Activated CD4-positive, alpha-beta T cell treated with anti-CD3 and anti-CD28 coated beads, Interleukin-2, amount 10 ng/mL, durations not matched to agents 7 days and 5 days (primary cell): ENCODE measurements at regions of chr20 and their contacts with region 1.

Region 1: GRCh38 chr20:53157443-53158408 is 185.6 kb downstream of the TSHZ2 start:
- DNase-seq: peak; percentile 38
- H3K4me3 Mint-ChIP-seq: no peak overlapping the region
- H3K27ac Mint-ChIP-seq: no peak overlapping the region
- H3K4me1 Mint-ChIP-seq: peaks cover 21% of the 10 kb centered on the region
- H3K27me3 Mint-ChIP-seq: no peaks in the 10 kb centered on the region

Region 2: GRCh38 chr20:52975029-52975732 is 182.5 kb before region 1 on chr20:
- CTCF ChIA-PET with region 1: interaction called, 4 read pairs
- POLR2A ChIA-PET with region 1: interaction called, 14 read pairs
- DNase-seq: no peak
- H3K4me3 Mint-ChIP-seq: peak overlapping the region; percentile 81
- H3K27ac Mint-ChIP-seq: peak overlapping the region; percentile 82
- H3K4me1 Mint-ChIP-seq: peaks cover 58% of the 10 kb centered on the region
- H3K27me3 Mint-ChIP-seq: peaks cover 20% of the 10 kb centered on the region